Activated naive CD4-positive, alpha-beta T cell treated with anti-CD3 and anti-CD28 coated beads, Interleukin-2, amount 10 ng/mL, durations not matched to agents 7 days and 5 days (primary cell): ENCODE measurements at regions of chr14 and their contacts with region 1.

Region 1: DNA sequence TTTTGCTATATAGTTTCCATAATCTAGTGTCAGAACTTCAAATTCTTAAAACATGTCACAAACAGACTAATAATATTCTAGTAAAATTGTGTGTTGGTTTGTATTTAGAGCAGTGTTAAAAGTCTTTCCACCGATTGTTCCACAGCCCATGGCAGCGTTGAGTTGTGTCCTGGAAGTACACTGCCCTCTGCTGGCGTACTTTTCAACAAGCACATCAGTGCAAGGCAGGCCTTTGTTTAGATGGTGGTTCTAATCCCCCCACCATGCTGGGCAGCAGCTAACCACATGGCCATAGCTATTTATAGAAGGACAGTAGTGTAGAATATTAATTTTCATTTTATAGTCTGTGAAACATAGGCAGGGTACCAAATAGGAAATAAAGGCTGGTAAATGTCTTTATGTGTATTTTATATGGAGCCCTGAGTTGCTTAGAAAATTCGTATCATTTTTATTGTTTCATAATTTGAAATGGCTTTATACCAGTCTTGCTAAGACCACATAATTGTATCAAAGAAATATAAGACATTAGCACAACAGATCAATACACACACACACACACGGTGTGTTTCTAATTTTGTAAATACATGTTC is 235.4 kb downstream of the SEC23A start:
- DNase-seq: peak; percentile 67
- H3K4me3 Mint-ChIP-seq: no peak overlapping the region
- H3K27ac Mint-ChIP-seq: no peak overlapping the region
- H3K4me1 Mint-ChIP-seq: no peaks in the 10 kb centered on the region
- H3K27me3 Mint-ChIP-seq: no peaks in the 10 kb centered on the region

Region 2: DNA sequence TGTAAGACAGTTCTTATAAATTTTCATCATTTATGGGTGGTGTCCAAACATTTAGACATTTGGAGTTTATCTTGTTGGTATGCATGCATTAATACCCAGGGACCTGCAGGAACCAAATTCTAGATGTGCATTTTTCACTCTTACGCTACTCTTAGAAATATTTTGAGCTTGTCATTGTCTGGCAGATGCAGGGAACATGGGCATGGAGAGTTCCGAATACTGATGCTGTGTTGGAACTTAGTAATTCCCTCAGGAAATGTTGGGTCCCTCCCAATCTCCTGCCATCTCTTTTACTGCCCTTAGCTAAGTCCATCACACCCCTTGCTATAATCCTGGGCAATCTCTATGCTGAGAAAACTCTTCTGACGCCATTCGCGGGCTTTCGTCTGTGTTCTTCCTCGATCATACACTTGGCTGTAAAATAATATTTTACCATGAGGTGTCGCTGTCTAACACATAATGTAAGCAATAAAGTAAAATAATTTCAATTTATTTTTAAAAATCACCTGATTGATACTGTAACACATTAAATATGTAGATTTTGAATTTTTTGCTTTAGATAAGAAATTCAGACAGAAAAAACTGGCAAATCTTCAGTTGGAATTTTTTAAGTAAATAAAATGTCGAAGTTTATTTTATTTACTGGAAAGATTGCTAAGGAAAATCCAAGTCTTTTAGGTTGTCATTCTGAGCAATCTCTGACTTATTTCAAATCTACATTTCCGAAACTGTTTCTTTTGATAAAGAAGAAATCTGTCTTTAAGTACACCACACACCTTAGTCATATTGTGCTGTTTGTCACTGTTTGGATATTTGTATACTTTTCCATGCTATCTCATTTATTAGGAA is 964.1 kb before region 1 on chr14:
- CTCF ChIA-PET with region 1: interaction called, 10 read pairs
- DNase-seq: no peak
- H3K4me3 Mint-ChIP-seq: no peak overlapping the region
- H3K27ac Mint-ChIP-seq: no peak overlapping the region
- H3K4me1 Mint-ChIP-seq: no peaks in the 10 kb centered on the region
- H3K27me3 Mint-ChIP-seq: peaks cover 16% of the 10 kb centered on the region

Region 3: DNA sequence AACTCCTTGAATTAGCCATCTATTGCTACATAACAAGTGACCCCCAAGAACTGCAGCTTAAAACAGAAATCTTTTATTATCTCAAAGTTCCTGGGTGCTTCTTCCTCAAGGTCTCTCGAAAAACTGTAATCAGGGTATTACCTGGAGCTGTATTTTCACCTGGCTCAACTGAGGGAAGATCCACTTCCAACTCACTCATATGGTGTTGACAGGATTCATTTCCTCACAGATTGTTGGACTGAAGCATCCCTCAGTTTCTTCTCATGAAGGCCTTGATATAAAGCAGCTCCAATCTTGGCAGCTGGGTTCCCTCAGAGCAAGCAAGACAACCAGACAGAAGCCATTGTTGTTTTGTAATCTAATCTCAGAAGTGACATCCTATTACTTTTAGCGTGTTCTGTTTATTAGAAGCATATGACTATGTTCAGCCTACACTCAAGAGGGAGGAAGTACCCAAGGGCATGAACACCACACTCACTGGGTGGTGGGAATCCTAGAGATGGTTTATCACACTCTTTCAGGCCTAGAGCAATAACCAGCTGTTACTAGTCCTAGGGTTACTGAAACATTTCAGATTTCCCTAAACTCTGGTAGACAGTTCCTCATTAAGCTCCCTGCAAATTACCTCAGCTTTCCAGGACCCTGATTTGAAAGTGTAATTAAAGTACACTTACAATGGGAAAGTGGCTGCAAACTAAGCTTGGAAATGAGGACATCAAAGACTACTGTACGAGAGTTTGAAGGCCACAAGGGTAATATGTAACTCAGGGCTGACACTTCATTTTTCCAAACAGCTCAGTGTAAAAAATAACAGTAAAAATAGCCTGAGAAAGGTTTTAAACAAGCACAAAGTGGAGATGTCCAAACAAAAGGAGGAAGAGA is 13.2 kb after region 1 on chr14:
- CTCF ChIA-PET with region 1: interaction called, 15 read pairs
- DNase-seq: no peak
- H3K4me3 Mint-ChIP-seq: no peak overlapping the region
- H3K27ac Mint-ChIP-seq: no peak overlapping the region
- H3K4me1 Mint-ChIP-seq: no peaks in the 10 kb centered on the region
- H3K27me3 Mint-ChIP-seq: peaks cover 14% of the 10 kb centered on the region